ENCODE measurements at regions of chr6 and their contacts with region 1.

Region 1: GRCh38 chr6:68634726-68635411 is at the start of gene ADGRB3:
- DNase-seq: peak; percentile 83 to 86
- ATAC-seq: peak; percentile 90 to 98 (median 93)
- H3K4me3 ChIP-seq: peak within 1 kb of the TSS; percentile 42 to 72 (median 66)
- H3K27ac ChIP-seq: peak within 1 kb of the TSS; percentile 34 to 82 (median 76)
- H3K4me1 ChIP-seq: peaks cover 0 to 27% (median 0%) of the 10 kb centered on the region in 9 donors
- H3K27me3 ChIP-seq: peaks cover 0 to 67% (median 10%) of the 10 kb centered on the region in 7 donors
- CTCF ChIP-seq: peak in 2 of 9 donors; percentile 21 to 39
- total RNA-seq, gene ADGRB3: 0.47 to 1.7 (median 0.79) TPM

Region 2: GRCh38 chr6:67757465-67758033 is 877.3 kb before region 1 on chr6:
- intact Hi-C with region 1: no loop called
- DNase-seq: no peak
- ATAC-seq: no peak
- H3K4me3 ChIP-seq: no peak overlapping the region
- H3K27ac ChIP-seq: no peak overlapping the region
- H3K4me1 ChIP-seq: no peaks in the 10 kb centered on the region
- H3K27me3 ChIP-seq: no peaks in the 10 kb centered on the region
- CTCF ChIP-seq: no peak

Region 3: GRCh38 chr6:68740828-68741500 is 106.1 kb after region 1 on chr6:
- intact Hi-C with region 1: no loop called
- DNase-seq: no peak
- ATAC-seq: no peak
- H3K4me3 ChIP-seq: no peak overlapping the region
- H3K27ac ChIP-seq: peak overlapping the region in 1 of 10 donors; percentile 0
- H3K4me1 ChIP-seq: peaks cover 0 to 11% (median 0%) of the 10 kb centered on the region in 9 donors
- H3K27me3 ChIP-seq: no peaks in the 10 kb centered on the region
- CTCF ChIP-seq: no peak

Region 4: DNA sequence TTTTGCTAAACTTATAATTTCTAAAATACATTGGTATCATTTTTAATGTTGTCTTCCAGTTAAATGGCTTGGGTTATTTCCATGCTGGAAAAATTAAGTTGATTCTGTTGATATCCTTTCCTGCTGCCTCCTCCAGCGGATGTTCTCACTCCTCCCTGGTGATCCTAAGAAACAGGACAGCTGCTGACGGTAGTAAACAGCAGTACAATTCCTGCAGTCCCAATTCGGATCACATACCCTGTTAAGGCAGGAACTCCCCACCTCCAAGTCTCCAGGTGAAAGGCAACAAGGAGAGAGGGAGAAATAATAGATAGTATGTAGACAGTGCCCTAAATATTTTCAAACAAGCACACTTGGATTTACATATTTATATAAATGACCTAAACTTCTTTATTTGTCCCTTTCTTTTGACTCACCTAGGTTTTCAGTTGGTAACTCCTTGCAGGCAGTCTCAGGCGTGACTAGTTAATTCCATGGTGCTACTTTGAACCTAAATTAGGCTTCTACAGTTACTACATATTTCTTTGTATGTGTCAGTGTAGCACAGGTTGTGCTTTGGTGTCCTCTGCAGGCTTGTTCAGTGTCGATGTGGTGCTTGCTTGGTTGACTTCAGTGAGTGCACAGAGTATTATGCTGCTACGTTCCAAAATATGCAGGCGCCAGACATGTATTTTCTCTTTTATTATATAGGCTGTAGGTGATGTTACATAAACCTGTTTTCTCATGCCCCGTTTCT is 126.2 kb after region 1 on chr6:
- intact Hi-C with region 1: loop called in 1 of 10 experiments (anchors 5 kb)
- DNase-seq: no peak
- ATAC-seq: peak in 6 of 8 donors; percentile 44 to 88 (median 76)
- H3K4me3 ChIP-seq: peak overlapping the region in 1 of 10 donors; percentile 19
- H3K27ac ChIP-seq: peak overlapping the region in 2 of 10 donors; percentile 23 to 47
- H3K4me1 ChIP-seq: peaks cover 0 to 20% (median 0%) of the 10 kb centered on the region in 9 donors
- H3K27me3 ChIP-seq: no peaks in the 10 kb centered on the region
- CTCF ChIP-seq: peak in 4 of 9 donors; percentile 12 to 52 (median 21)

Region 5: DNA sequence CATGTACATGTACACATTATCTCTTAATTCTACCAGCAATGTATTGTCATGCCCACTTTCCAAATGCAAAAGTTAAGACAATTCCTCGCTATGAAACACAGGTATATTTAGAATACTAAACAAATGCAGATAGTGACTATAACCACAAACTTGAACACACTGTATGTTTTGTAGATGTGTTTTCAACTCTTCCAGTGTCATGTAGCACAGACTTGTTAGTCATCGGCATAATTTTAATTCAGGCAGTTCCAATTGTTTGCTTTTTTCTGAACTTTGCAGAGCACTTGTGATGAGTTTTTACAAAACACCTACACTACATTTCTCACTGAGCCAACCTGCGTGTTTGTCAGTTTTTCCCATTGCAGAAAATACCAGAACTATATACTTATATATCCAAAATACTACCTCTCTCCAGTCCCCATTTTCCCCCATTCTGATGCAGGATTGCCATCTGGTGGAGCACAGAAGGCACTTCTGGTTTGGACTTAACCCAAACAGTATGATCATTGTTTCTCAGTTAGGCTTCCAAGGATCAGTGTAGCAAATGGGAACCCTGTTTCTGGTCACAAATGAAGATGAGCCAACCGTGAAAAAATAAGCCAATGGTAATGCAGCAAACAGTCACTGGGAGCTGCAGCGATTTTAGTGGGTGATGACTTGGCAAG is 143.6 kb after region 1 on chr6:
- intact Hi-C with region 1: loop called (anchors 1 to 10 kb)
- DNase-seq: peak in 1 of 2 donors; percentile 39
- ATAC-seq: peak in 7 of 8 donors; percentile 55 to 96 (median 82)
- H3K4me3 ChIP-seq: no peak overlapping the region
- H3K27ac ChIP-seq: no peak overlapping the region
- H3K4me1 ChIP-seq: peaks cover 0 to 9% (median 0%) of the 10 kb centered on the region in 9 donors
- H3K27me3 ChIP-seq: no peaks in the 10 kb centered on the region
- CTCF ChIP-seq: peak; percentile 47 to 82 (median 67)

Region 6: DNA sequence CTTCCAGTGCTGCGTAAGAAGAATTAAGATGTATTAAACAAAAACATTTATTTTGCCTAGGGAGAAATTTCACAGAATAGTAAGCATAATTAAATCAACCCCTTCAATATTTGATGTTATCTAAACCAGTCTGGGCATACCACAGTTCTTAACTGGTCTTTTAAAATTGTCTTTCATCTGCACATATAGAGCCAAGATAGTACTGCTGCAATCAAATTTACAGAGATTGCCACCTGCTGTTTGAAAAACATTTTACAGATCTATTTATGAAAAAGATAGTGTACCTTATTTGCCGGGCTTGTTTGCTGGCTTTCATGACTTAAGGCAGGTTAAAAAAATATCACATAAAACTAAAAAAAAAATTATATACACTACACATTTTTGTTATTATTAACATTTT is 323.5 kb after region 1 on chr6:
- intact Hi-C with region 1: loop called in 6 of 10 experiments (anchors 5 to 10 kb)
- DNase-seq: no peak
- ATAC-seq: no peak
- H3K4me3 ChIP-seq: no peak overlapping the region
- H3K27ac ChIP-seq: no peak overlapping the region
- H3K4me1 ChIP-seq: no peaks in the 10 kb centered on the region
- H3K27me3 ChIP-seq: no peaks in the 10 kb centered on the region
- CTCF ChIP-seq: peak in 5 of 9 donors; percentile 24 to 49 (median 28)

Region 7: DNA sequence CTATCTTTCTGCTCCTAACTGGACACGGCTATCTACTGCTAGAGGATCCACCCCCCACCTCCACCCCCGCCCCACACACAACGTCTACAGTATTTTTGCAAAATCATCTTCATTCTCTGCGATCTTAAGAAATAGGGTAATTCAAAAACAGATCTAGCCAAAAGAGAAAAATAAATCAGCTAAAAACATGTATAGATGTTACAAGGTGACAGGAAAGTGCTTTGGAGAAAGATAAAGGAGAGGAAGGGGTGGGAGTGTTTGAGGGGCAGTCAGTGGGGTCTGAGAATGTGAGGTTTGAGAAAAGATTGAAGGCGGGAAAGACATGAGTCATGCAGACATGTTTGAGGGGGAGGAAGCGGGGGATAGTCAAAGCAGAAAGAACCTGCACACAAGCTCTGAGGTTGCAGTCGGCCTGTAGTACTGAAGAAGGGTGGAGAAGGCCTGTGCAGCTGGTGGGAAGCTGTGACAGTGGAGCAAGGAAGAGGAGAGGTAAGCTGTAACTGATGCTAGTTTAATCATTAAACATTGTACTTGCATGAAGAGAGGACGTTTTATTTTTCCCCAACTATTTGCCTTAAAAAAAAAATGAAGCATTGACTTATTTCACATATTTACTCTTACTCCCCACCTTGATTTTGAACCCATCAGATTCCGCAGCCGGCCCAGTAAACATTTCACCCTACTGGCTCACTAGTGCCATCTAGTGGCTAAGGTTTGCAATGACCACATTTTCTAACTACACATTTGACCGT is 332.9 kb after region 1 on chr6:
- intact Hi-C with region 1: loop called in 6 of 10 experiments (anchors 10 kb)
- DNase-seq: peak; percentile 27 to 59
- ATAC-seq: peak in 6 of 8 donors; percentile 47 to 67 (median 60)
- H3K4me3 ChIP-seq: no peak overlapping the region
- H3K27ac ChIP-seq: no peak overlapping the region
- H3K4me1 ChIP-seq: peaks cover 0 to 8% (median 0%) of the 10 kb centered on the region in 9 donors
- H3K27me3 ChIP-seq: no peaks in the 10 kb centered on the region
- CTCF ChIP-seq: peak; percentile 72 to 91 (median 84)